ENCODE measurements at regions of chr3 and their contacts with region 1.

Region 1: DNA sequence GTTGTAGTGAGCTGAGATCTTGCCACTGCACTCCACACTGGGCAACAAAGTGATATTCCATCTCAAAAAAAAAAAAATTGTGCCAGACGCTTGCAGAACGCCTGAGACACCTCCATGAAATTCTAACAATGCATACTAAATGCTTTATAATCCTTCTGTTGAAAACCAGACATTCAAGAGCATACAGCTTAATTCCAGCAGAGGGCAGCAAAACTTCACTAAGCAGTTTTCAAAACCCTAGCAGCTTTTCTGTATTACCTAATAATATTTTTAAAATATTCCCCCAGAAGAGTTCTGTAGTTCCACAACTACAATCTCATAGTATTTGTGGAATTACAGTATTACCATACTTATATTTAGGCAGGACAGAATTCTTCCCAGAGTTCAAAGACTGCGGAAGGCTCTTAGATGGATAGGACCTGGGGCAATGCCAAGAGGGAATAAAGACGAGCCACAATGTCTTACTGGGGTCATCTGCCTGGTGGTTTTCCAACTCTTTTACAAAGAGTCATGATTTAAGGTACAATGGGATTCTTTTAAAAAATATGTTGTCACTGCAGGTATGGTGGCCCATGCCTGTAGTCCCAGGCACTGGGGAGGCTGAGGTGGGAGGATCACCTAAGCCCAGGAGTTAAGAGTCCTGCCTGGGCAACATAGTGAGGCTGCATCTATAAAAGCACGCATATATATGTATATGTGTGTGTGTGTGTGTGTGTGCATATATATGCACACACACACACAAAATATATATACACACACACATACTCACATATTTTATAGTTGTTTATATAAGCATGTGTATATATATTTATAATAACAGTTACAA is 19.6 kb upstream of the TASOR start:
- DNase-seq: no peak
- H3K4me3 ChIP-seq: no peak overlapping the region
- H3K27ac ChIP-seq: no peak overlapping the region
- H3K4me1 ChIP-seq: no peaks in the 10 kb centered on the region
- H3K27me3 ChIP-seq: no peaks in the 10 kb centered on the region
- CTCF ChIP-seq: peak; percentile 73 to 93 (median 87)
- POLR2A ChIP-seq: no peak

Region 2: DNA sequence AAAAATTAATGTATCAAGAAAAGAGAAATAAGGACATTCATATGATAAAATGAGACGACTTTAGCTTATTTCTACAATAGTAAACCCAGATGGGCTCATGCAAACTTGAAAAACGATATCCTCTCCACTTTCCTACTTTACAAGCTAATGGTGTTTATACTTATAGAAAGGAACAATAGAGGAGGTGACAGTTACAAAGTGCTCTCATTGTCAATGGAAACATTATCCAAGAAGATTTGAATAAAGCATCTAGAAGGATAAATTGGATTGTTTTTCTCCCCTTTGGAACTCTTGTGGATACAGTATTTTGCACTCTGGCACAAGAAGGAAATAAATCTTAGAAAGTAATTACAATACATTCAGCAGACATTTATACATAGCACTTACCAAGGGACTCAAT is 166.0 kb before region 1 on chr3:
- intact Hi-C with region 1: loop called (anchors 10 kb)
- DNase-seq: no peak
- H3K4me3 ChIP-seq: no peak overlapping the region
- H3K27ac ChIP-seq: no peak overlapping the region
- H3K4me1 ChIP-seq: no peaks in the 10 kb centered on the region
- H3K27me3 ChIP-seq: no peaks in the 10 kb centered on the region
- CTCF ChIP-seq: no peak
- POLR2A ChIP-seq: no peak

Region 3: GRCh38 chr3:56682462-56683121 is 20.1 kb before region 1 on chr3:
- intact Hi-C with region 1: no loop called
- DNase-seq: peak; percentile 65 to 72
- H3K4me3 ChIP-seq: peak overlapping the region; percentile 75 to 98 (median 90)
- H3K27ac ChIP-seq: peak overlapping the region; percentile 98 to 100
- H3K4me1 ChIP-seq: no peaks in the 10 kb centered on the region
- H3K27me3 ChIP-seq: no peaks in the 10 kb centered on the region
- CTCF ChIP-seq: peak in 1 of 3 donors; percentile 18
- POLR2A ChIP-seq: no peak

Region 4: GRCh38 chr3:56988458-56989168 is 285.9 kb after region 1 on chr3:
- intact Hi-C with region 1: loop called (anchors 10 kb)
- DNase-seq: peak; percentile 58 to 81
- H3K4me3 ChIP-seq: no peak overlapping the region
- H3K27ac ChIP-seq: no peak overlapping the region
- H3K4me1 ChIP-seq: no peaks in the 10 kb centered on the region
- H3K27me3 ChIP-seq: no peaks in the 10 kb centered on the region
- CTCF ChIP-seq: peak; percentile 78 to 83 (median 82)
- POLR2A ChIP-seq: no peak